ENCODE measurements at regions of chr16 and their contacts with region 1.

Region 1: DNA sequence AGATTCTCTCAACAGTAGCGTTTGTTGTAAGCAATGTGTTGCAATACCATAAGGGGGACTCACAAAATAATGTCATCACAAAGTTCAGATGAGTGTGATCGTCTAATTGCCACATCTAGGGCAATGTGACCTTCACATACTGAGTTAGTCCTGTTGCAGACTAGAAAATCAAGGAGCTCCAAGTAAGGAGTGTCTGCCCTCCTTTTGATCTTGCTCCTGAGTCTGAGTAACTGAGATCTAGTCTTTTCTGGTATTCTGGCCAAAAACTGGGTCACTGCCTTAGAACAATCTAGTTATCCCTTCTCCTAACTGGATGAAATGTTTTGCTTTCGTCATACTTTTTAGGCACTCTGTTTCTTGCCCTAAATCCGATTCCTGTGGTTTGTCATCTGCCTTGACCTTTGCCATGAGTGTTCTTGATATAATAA is 712.1 kb downstream of the CDH11 start:
- DNase-seq: peak in 4 of 7 donors; percentile 25 to 53 (median 44)
- H3K4me3 ChIP-seq: no peak overlapping the region
- H3K27ac ChIP-seq: peak overlapping the region; percentile 4 to 72 (median 46)
- H3K4me1 ChIP-seq: peaks cover 15 to 19% of the 10 kb centered on the region in 2 donors
- H3K27me3 ChIP-seq: no peaks in the 10 kb centered on the region
- CTCF ChIP-seq: no peak
- POLR2A ChIP-seq: no peak

Region 2: DNA sequence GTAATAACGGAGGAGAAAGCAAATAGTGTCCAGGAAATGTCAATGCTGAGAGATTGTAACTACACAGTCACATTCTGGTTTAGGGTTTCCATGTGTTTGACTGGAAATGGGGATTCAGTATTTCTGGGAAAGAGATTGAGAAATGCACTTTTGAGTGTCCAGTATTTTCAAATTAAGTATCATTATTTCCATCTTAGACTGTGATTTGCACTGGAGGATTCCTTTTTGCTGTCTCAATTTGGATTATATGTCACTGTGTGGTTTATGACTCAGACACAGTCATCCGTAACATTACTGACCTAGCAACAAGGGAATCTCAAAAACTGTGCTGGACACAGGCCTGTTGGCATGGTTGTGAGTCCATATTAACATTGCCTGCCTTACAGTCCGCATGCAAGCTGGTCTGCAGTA is 30.6 kb after region 1 on chr16:
- intact Hi-C with region 1: loop called in 1 of 2 experiments (anchors 2 kb)
- DNase-seq: peak in 6 of 7 donors; percentile 11 to 51 (median 22)
- H3K4me3 ChIP-seq: no peak overlapping the region
- H3K27ac ChIP-seq: peak overlapping the region in 1 of 5 donors; percentile 33
- H3K4me1 ChIP-seq: no peaks in the 10 kb centered on the region
- H3K27me3 ChIP-seq: no peaks in the 10 kb centered on the region
- CTCF ChIP-seq: no peak
- POLR2A ChIP-seq: no peak

Region 3: DNA sequence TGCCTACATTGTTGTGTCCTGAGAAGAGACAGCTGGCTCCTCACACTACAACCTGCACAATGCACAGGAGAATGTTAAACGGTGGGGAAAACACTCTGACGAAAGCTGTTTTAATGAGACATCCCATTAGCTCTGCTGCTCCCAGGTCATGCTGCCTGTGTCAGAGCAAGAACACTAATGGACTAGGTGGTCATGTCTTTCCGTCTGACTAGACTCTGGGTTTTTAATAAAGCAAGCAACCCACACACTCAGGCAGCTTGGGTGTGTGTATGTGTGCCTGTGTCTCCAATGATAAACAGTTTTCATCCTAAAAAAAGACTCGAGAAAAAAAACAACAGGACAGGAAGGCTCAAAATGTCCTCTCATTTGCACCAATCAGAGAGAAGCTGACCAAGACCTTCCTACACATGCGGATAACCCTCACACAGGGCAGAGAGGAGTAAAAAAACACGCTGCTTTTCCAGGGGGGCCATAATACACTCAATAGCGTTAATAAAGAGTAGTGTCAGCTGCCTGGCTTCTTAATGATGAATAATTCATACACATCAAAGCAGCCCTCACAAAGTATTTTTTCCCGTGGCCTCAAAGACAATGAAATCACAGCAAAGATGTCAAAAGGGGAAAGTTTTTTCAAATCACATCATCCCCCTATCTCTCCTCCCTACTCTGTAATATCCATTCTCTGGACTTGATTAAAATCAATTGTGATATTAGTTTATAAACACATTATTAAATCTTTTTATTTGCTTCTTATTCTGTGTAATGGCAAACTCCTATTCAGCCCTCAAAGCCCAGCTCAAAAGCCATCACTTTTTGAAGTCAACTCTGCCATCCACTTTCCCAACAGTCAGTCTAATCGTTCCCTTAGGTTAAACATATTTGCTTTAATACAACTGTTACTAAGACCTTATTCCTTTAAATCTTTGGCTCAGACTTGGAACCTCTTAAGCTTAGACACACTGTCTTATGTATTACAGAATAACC is 956.2 kb after region 1 on chr16:
- intact Hi-C with region 1: no loop called
- DNase-seq: no peak
- H3K4me3 ChIP-seq: no peak overlapping the region
- H3K27ac ChIP-seq: no peak overlapping the region
- H3K4me1 ChIP-seq: no peaks in the 10 kb centered on the region
- H3K27me3 ChIP-seq: no peaks in the 10 kb centered on the region
- CTCF ChIP-seq: no peak
- POLR2A ChIP-seq: no peak

Measured in adrenal gland (tissue), 19 donors.